ENCODE measurements at regions of chr13 and their contacts with region 1.

Region 1: GRCh38 chr13:91196958-91197357 is 150.5 kb upstream of the MIR17HG start:
- DNase-seq: no peak
- ATAC-seq: no peak
- H3K4me3 ChIP-seq: no peak overlapping the region
- H3K27ac ChIP-seq: no peak overlapping the region
- H3K4me1 ChIP-seq: no peaks in the 10 kb centered on the region
- H3K27me3 ChIP-seq: no peaks in the 10 kb centered on the region
- CTCF ChIP-seq: no peak

Region 2: GRCh38 chr13:91592056-91593014 is 395.4 kb after region 1 on chr13:
- intact Hi-C with region 1: loop called in 1 of 10 experiments (anchors 10 kb)
- DNase-seq: no peak
- ATAC-seq: peak in 1 of 8 donors; percentile 15
- H3K4me3 ChIP-seq: no peak overlapping the region
- H3K27ac ChIP-seq: no peak overlapping the region
- H3K4me1 ChIP-seq: no peaks in the 10 kb centered on the region
- H3K27me3 ChIP-seq: no peaks in the 10 kb centered on the region
- CTCF ChIP-seq: no peak